ENCODE measurements at regions of chr12 and their contacts with region 1.

Region 1: DNA sequence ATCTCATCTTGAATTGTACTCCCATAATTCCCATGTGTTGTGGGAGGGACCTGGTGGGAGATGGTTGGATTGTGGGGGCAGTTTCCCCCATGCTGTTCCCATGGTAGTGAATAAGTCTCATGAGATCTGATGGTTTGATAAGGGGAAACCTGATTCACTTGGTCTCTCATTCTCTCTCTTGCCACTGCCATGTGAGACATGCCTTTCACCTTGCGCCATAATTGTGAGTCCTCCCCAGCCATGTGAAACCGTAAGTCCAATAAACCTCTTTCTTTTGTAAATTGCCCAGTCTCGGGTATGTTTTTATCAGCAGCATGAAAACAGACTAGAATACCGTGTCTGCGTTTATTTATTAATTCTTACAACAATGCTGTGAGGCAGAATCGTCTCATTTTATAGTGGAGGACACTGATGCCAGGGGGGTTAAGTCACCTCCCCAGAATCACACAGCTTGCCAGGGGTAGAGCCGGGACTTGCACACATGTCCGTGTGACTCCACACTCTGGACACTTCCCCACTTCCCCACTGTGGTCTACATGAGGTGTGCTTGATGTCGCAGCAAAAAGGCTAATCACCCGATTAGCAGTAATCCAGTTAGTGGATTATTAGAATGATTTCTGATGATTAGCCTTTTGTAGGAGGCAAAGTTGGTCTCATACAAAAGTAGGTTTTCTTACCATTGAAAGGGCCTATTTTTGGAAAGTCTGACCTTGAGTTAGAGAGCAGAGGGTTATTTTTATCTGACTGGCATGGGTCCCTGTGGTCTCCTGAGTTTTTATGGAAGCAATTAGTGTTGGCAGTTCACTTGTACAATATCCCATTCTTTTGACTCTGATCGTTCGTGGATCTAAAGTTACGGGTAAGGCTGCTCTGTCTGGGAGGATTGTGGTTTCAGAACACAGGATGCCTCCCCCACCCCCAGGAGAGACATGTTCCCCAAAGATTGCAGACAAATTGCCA is 47.4 kb upstream of the BCL7A start:
- DNase-seq: no peak
- H3K4me3 ChIP-seq: no peak overlapping the region
- H3K4me3 Mint-ChIP-seq: no peak overlapping the region
- H3K27ac ChIP-seq: no peak overlapping the region
- H3K27ac Mint-ChIP-seq: peak overlapping the region in 1 of 8 donors; percentile 23
- H3K4me1 ChIP-seq: no peaks in the 10 kb centered on the region
- H3K4me1 Mint-ChIP-seq: no peaks in the 10 kb centered on the region
- H3K27me3 ChIP-seq: no peaks in the 10 kb centered on the region
- H3K27me3 Mint-ChIP-seq: peaks cover 3 to 7% of the 10 kb centered on the region in 2 donors

Region 2: DNA sequence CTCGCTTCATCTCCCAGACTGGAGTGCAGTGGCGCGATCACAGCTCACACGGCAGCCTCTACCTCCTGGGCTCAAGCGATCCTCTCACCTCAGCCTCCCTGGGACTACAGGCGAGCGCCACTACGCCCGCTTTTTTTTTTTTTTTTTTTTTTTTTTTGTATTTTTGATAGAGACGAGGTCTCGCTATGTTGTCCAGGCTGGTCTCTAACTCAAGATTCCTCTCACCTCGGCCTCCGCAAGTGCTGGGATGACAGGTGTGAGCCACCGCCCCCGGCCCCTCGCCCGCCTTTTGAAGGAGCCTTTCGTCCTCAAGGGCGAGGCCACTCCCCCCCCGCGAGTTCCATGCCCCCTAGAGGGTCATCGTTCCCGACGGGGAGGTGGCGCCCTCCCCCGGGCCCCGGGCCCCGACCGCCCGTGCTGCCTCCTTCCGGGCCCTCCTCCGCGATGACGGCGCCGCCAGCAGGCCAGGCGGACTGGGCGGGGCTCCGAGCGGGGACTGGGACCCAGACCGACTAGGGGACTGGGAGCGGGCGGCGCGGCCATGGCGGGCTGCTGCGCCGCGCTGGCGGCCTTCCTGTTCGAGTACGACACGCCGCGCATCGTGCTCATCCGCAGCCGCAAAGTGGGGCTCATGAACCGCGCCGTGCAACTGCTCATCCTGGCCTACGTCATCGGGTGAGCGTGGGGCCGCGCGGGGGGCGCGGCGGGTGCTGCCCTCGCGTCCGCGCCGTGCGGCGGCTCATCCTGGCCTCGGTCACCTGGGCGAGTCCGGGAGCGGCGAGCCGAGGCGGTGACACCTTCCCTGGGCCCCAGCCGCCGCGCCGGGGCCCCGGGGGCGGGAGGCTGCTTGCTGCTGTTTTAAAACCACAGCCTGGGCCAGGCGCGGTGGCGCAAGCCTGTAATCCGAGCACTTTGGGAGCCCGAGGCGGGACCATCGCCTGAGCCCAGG is 764.4 kb before region 1 on chr12 and contains the start of gene P2RX4:
- CTCF ChIA-PET with region 1: no interaction called
- POLR2A ChIA-PET with region 1: interaction called, 13 read pairs
- DNase-seq: peak; percentile 79 to 92 (median 89)
- H3K4me3 ChIP-seq: peak within 1 kb of the TSS; percentile 65
- H3K4me3 Mint-ChIP-seq: peak within 1 kb of the TSS; percentile 82 to 97 (median 91)
- H3K27ac ChIP-seq: peak within 1 kb of the TSS; percentile 90
- H3K27ac Mint-ChIP-seq: peak within 1 kb of the TSS; percentile 90 to 99 (median 96)
- H3K4me1 ChIP-seq: peaks cover 16% of the 10 kb centered on the region
- H3K4me1 Mint-ChIP-seq: peaks cover 22 to 41% (median 22%) of the 10 kb centered on the region in 3 donors
- H3K27me3 ChIP-seq: no peaks in the 10 kb centered on the region
- H3K27me3 Mint-ChIP-seq: no peaks in the 10 kb centered on the region
- total RNA-seq, gene P2RX4: 39.2 to 40.3 TPM

Region 3: GRCh38 chr12:121939186-121939585 is 35.1 kb before region 1 on chr12:
- CTCF ChIA-PET with region 1: no interaction called
- POLR2A ChIA-PET with region 1: no interaction called
- DNase-seq: no peak
- H3K4me3 ChIP-seq: no peak overlapping the region
- H3K4me3 Mint-ChIP-seq: no peak overlapping the region
- H3K27ac ChIP-seq: no peak overlapping the region
- H3K27ac Mint-ChIP-seq: peak overlapping the region in 3 of 8 donors; percentile 40 to 47 (median 47)
- H3K4me1 ChIP-seq: no peaks in the 10 kb centered on the region
- H3K4me1 Mint-ChIP-seq: peaks cover 4 to 6% (median 5%) of the 10 kb centered on the region in 3 donors
- H3K27me3 ChIP-seq: no peaks in the 10 kb centered on the region
- H3K27me3 Mint-ChIP-seq: peaks cover 0 to 2% of the 10 kb centered on the region in 2 donors